ENCODE measurements at regions of chr4 and their contacts with region 1.

Region 1: GRCh38 chr4:104064646-104065577 is 345.1 kb upstream of the TACR3 start:
- DNase-seq: peak; percentile 4
- CTCF ChIP-seq: peak; percentile 46

Region 2: DNA sequence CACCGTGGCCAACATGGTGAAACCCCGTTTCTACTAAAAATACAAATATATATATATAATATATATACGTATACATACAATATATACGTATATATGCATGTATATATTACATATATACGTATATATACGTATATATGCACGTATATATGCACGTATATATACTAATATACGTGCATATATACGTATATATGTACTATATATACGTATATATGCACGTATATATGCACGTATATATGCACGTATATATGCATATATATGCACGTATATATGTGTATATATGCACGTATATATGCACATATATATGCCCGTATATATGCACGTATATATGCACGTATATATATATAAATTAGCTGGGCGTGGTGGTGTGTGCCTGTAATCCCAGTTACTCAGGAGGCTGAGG is 332.5 kb before region 1 on chr4:
- in situ Hi-C with region 1: no loop called
- DNase-seq: no peak
- CTCF ChIP-seq: no peak

Region 3: GRCh38 chr4:104860238-104861123 is 795.6 kb after region 1 on chr4:
- in situ Hi-C with region 1: loop called (anchors 25 kb)
- DNase-seq: peak; percentile 62
- CTCF ChIP-seq: peak; percentile 69

Measured in GM13976 (cell line).